MCF 10A (cell line): ENCODE measurements at regions of chr7 and their contacts with region 1.

Region 1: GRCh38 chr7:142535123-142535779 is 214.0 kb upstream of the PRSS1 start:
- DNase-seq: peak; percentile 93
- H3K4me3 Mint-ChIP-seq: no peak overlapping the region
- H3K27ac Mint-ChIP-seq: no peak overlapping the region
- H3K4me1 Mint-ChIP-seq: peaks cover 21% of the 10 kb centered on the region
- H3K27me3 Mint-ChIP-seq: no peaks in the 10 kb centered on the region
- CTCF ChIP-seq: peak; percentile 93

Region 2: DNA sequence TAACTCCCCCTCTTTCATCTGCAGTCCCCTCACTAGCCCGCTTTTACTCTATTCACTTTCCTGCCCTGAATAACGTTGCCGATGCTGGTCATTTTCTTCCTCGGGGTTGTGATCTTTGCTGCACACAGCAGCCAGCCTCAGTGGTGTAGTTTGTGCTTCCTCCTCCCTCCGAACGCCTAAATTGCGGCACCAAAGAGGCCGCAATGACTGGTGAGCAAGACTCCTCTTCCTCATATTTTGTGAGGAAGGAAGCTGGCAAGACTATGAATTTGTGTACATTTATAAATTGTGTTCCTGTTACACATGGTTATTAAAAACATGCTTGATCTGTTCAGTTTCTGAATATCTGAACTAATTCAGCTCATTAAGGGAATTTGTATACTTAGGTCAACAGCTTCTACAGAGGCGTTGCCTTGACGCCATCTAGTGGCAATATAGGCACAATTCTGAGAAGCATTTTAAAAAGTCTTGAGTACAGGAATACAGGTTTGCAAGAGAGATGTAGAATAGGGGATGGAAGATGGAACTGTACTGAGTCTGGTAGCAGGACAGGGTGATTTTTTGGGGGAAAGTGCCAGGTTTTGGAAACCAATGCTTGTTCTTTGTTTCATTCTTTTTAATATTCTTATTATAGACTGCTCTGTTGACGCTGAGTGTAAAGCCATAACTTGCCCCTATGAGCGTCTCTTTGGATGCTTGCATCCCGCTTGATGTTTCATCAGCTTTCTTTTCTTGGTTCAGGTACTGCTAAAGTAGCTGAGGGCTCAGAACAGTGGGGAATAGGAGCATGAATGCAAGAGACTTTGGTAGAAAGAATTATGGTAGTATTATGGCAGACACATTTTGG is 749.3 kb before region 1 on chr7:
- CTCF ChIA-PET with region 1: no interaction called
- POLR2A ChIA-PET with region 1: no interaction called
- intact Hi-C with region 1: no loop called
- DNase-seq: peak; percentile 62
- H3K4me3 Mint-ChIP-seq: no peak overlapping the region
- H3K27ac Mint-ChIP-seq: no peak overlapping the region
- H3K4me1 Mint-ChIP-seq: no peaks in the 10 kb centered on the region
- H3K27me3 Mint-ChIP-seq: no peaks in the 10 kb centered on the region
- CTCF ChIP-seq: peak; percentile 54

Region 3: DNA sequence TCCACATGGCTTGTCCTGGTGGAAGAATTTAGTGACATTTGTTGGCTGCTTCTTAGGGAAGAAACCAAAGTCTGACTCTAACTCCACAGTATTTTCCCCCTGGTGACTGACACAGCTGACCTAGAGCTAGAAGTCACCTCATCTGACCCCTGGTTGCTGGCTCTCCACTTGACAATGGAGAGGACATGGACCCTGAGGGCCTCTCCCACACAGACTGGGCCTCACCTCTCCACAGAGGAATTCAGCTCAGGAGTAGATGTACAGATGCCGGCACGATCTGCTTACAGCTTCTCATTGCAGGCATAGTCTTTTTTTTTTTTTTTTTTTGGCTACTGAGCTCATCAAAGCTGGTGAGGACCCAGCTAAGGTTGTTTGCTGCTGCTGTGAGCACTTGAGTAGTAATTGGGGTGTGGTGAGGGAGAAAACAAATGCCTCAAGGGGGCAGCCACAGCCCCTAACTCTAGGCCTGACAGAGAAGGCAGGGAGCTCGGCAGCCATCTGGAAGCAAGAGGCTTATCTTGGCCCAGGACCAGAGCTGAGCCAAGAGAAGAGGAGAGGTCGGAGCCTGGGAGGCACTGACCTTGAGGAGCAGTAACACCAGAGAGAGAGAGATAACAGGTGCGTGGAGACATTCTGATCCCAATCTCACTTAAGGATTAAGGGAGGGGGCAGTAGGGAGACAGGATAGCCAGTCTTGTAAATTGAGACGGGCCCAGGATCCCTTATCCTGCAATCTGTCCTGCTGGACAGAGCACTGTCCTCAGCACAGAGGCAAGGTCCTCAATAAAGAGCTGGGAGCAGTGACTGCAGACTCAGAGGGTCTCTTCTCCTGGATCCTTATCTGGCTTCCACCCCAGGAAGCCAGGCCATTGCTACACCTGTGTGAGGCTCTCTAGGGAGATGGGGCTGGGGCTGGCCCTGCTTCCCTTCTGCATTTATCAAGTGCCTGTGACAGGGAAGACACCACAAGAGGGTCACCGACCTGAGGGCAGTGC is 286.8 kb before region 1 on chr7:
- CTCF ChIA-PET with region 1: no interaction called
- POLR2A ChIA-PET with region 1: no interaction called
- intact Hi-C with region 1: no loop called
- DNase-seq: no peak
- H3K4me3 Mint-ChIP-seq: no peak overlapping the region
- H3K27ac Mint-ChIP-seq: no peak overlapping the region
- H3K4me1 Mint-ChIP-seq: no peaks in the 10 kb centered on the region
- H3K27me3 Mint-ChIP-seq: peaks cover 14% of the 10 kb centered on the region
- CTCF ChIP-seq: no peak

Region 4: GRCh38 chr7:142496545-142497041 is 38.7 kb before region 1 on chr7:
- CTCF ChIA-PET with region 1: interaction called, 15 read pairs
- POLR2A ChIA-PET with region 1: no interaction called
- intact Hi-C with region 1: no loop called
- DNase-seq: peak; percentile 63
- H3K4me3 Mint-ChIP-seq: no peak overlapping the region
- H3K27ac Mint-ChIP-seq: no peak overlapping the region
- H3K4me1 Mint-ChIP-seq: peaks cover 26% of the 10 kb centered on the region
- H3K27me3 Mint-ChIP-seq: peaks cover 28% of the 10 kb centered on the region
- CTCF ChIP-seq: peak; percentile 81

Region 5: DNA sequence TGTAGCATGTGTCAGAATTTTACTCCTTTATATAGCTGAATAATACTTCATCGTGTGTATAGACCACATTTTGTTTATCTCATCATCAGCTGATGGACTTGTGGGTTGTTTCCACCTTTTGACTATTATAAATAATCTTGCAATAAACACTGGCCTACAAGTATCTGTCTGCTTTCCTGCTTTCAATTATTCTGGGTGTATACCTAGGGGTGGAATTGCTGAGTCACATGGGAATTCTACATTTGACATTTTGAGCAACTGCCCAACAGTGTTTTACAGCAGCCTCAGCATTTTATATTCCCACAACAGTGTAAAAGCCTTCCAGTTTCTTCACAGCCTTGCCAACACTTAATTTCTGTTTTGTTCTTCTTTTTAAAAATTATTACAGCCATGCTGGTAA is 13.7 kb after region 1 on chr7:
- CTCF ChIA-PET with region 1: interaction called, 18 read pairs
- POLR2A ChIA-PET with region 1: no interaction called
- intact Hi-C with region 1: no loop called
- DNase-seq: peak; percentile 28
- H3K4me3 Mint-ChIP-seq: no peak overlapping the region
- H3K27ac Mint-ChIP-seq: no peak overlapping the region
- H3K4me1 Mint-ChIP-seq: peaks cover 2% of the 10 kb centered on the region
- H3K27me3 Mint-ChIP-seq: no peaks in the 10 kb centered on the region
- CTCF ChIP-seq: no peak

Region 6: DNA sequence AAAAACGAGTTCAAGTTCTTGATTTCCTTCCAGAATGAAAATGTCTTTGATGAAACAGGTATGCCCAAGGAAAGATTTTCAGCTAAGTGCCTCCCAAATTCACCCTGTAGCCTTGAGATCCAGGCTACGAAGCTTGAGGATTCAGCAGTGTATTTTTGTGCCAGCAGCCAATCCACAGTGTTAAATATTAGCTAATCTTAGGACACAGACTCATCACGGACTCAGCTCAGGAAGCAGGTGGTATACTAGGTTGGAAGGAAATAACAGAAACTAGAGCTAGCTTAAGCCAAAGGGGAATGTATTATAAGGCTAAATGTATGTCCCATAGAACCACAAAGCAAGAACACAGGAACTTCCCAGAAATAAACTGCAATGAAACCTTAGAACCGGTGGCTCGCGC is 63.0 kb after region 1 on chr7:
- CTCF ChIA-PET with region 1: interaction called, 63 read pairs
- POLR2A ChIA-PET with region 1: no interaction called
- intact Hi-C with region 1: no loop called
- DNase-seq: no peak
- H3K4me3 Mint-ChIP-seq: no peak overlapping the region
- H3K27ac Mint-ChIP-seq: no peak overlapping the region
- H3K4me1 Mint-ChIP-seq: no peaks in the 10 kb centered on the region
- H3K27me3 Mint-ChIP-seq: no peaks in the 10 kb centered on the region
- CTCF ChIP-seq: no peak

Region 7: DNA sequence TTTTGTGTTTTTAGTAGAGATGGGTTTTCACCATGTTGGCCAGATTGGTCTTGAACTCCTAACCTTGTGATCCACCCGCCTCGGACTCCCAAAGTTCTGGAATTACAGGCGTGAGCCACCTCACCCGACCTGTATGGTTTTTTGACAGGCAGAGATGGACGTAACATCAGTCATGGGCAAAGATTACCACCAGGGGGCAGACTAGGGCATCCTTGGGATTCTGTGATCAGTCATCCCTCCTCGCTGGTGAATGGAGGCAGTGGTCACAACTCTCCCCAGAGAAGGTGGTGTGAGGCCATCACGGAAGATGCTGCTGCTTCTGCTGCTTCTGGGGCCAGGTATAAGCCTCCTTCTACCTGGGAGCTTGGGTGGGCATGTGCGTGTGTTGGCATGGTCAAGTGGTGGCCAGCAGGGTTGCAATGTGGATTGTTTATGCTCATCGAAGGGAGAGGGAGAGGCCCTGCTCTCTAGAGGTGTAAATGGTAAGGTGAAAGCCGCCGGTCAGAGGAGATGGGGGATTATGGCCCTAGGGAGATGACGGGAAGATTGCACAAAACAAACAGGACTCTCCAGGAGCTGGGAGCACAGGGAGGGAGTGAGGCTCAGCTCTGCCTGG is 91.3 kb after region 1 on chr7:
- CTCF ChIA-PET with region 1: interaction called, 72 read pairs
- POLR2A ChIA-PET with region 1: no interaction called
- intact Hi-C with region 1: no loop called
- DNase-seq: peak; percentile 77
- H3K4me3 Mint-ChIP-seq: no peak overlapping the region
- H3K27ac Mint-ChIP-seq: no peak overlapping the region
- H3K4me1 Mint-ChIP-seq: peaks cover 5% of the 10 kb centered on the region
- H3K27me3 Mint-ChIP-seq: no peaks in the 10 kb centered on the region
- CTCF ChIP-seq: peak; percentile 51

Region 8: DNA sequence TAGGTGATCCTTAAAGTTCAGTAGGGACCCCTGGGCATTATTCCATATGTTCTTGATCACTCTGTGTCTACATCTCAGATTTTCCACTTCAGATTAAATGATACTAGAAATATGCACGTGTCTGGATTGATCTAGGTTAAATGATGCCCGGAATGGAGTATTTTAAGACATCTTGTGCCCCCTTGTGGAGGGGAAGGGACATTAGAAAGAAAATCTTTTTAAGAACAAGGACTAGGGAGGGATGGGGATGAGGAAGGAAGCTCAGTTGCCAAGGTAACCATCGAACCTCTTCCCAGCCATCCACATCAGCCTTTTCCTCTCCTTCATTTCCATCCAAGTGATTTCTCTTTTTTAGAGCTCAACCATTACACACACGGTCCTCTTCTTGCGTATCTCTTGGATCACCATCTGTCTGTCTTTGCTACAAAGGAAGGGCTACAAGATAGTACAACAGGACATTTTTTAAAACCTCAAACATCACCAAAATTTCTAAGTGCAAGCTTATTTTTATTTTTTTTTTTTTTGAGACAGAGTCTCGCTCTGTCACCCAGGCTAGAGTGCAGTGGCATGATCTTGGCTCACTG is 276.0 kb after region 1 on chr7:
- CTCF ChIA-PET with region 1: interaction called, 43 read pairs
- POLR2A ChIA-PET with region 1: no interaction called
- intact Hi-C with region 1: loop called (anchors 1 kb)
- DNase-seq: peak; percentile 58
- H3K4me3 Mint-ChIP-seq: no peak overlapping the region
- H3K27ac Mint-ChIP-seq: no peak overlapping the region
- H3K4me1 Mint-ChIP-seq: no peaks in the 10 kb centered on the region
- H3K27me3 Mint-ChIP-seq: peaks cover 79% of the 10 kb centered on the region
- CTCF ChIP-seq: peak; percentile 63

Region 9: GRCh38 chr7:142960955-142961512 is 425.8 kb after region 1 on chr7:
- CTCF ChIA-PET with region 1: no interaction called
- POLR2A ChIA-PET with region 1: no interaction called
- intact Hi-C with region 1: no loop called
- DNase-seq: peak; percentile 37
- H3K4me3 Mint-ChIP-seq: no peak overlapping the region
- H3K27ac Mint-ChIP-seq: no peak overlapping the region
- H3K4me1 Mint-ChIP-seq: no peaks in the 10 kb centered on the region
- H3K27me3 Mint-ChIP-seq: peaks cover 55% of the 10 kb centered on the region
- CTCF ChIP-seq: no peak